ENCODE measurements at regions of chr17 and their contacts with region 1.

Region 1: GRCh38 chr17:80866147-80866793 is 125.4 kb upstream of the CHMP6 start:
- DNase-seq: peak; percentile 62 to 84
- H3K4me3 ChIP-seq: no peak overlapping the region
- H3K27ac ChIP-seq: no peak overlapping the region
- H3K4me1 ChIP-seq: peaks cover 0 to 2% (median 0%) of the 10 kb centered on the region in 4 donors
- H3K27me3 ChIP-seq: no peaks in the 10 kb centered on the region
- CTCF ChIP-seq: peak in 5 of 7 experiments; percentile 42 to 71 (median 54)
- EP300 ChIP-seq: no peak
- POLR2A ChIP-seq: no peak

Region 2: DNA sequence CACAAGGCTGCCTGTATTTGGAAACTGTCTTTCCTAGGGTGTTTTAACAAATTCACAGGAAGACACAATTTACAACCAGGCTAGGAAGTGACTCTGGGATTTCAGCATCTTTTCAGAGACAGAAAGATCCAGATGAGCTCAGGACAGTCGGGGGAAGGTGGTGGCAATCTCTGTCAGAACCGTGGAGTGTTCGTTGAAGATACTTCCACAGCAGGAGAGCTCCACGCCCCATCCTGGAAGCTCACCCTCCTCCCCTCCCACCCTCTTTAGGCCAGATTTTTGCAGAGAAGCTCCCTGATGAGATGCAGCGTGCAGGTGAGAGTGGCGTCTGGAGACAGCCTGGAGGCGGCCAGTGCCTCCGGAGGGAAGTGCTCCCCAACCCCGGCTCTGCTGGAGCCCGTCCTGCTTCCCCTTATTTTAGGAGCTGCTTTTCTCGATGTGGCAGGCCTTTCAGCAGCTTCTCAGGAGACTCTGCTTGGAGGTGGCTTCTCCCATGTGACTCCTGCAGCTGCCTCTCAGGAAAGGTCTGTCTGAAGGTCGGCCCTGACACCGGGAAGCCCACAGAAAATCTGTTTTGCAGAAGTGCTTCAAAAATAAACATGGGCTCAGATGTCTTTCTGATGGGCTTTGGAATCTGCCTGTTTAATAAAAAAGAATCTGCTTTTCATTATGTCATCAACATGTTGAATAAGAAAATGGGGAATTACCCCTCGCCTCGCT is 61.1 kb before region 1 on chr17:
- intact Hi-C with region 1: no loop called
- DNase-seq: no peak
- H3K4me3 ChIP-seq: no peak overlapping the region
- H3K27ac ChIP-seq: no peak overlapping the region
- H3K4me1 ChIP-seq: no peaks in the 10 kb centered on the region
- H3K27me3 ChIP-seq: no peaks in the 10 kb centered on the region
- CTCF ChIP-seq: no peak
- EP300 ChIP-seq: no peak
- POLR2A ChIP-seq: no peak

Region 3: GRCh38 chr17:80970044-80970761 is 103.9 kb after region 1 on chr17:
- intact Hi-C with region 1: loop called (anchors 10 kb)
- DNase-seq: peak; percentile 39 to 77
- H3K4me3 ChIP-seq: no peak overlapping the region
- H3K27ac ChIP-seq: peak overlapping the region in 2 of 5 donors; percentile 4 to 45
- H3K4me1 ChIP-seq: peaks cover 17 to 36% (median 28%) of the 10 kb centered on the region in 4 donors
- H3K27me3 ChIP-seq: peaks cover 0 to 39% (median 27%) of the 10 kb centered on the region in 3 donors
- CTCF ChIP-seq: peak in 5 of 7 experiments; percentile 26 to 74 (median 39)
- EP300 ChIP-seq: no peak
- POLR2A ChIP-seq: no peak